WTC11 (cell line): ENCODE measurements at regions of chr9 and their contacts with region 1.

Region 1: DNA sequence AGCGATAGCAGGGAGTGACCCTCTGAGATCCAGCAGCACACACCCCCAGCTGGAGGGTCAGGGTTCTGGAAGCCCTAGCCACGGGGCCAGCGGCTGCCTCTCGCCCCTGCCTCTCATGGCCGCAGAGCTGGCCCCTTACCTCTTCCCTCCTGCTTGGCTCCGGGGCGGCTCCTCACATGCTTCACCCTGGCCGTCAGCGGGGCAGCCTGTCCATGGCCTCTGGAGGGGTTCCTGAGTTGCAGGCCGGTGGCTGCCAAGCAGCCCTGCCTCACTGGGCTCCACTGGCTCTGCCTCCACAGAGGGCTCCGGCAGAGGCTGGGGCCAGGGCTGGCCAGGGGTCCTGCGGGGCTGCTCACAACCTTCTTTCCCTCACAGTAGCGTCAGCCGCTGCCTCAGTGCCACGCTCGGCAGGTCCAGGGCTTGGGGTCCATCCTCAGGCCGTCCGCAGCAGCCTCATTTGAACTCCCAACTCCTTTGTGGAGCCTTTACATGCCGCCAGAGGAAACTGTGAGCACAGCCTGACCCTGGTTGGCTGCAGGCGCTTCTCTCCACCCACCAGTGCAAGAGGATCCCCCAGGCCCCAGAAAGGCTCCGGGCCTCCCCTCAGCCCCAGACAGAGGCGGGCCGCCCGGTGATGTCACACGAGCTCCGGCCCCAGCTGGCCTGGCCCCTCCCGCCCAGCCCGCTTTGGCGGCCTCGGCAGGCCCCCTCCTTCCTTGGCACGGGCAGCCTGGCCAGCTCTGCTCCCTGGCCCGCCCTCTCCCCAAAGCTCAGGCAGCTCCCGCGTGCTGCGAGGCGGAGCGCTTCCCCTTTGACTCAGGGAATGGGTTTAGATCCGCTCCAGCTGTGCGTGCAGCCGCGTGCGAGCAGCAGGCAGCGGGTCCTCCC is at the start of gene ANGPTL2:
- DNase-seq: peak; percentile 91
- ATAC-seq: peak; percentile 92
- H3K4me3 Mint-ChIP-seq: peak within 1 kb of the TSS; percentile 77
- H3K27ac Mint-ChIP-seq: peak within 1 kb of the TSS; percentile 54; the same call in 1 of the 2 replicates
- H3K4me1 Mint-ChIP-seq: peaks cover 29% of the 10 kb centered on the region
- H3K27me3 Mint-ChIP-seq: no peaks in the 10 kb centered on the region; the same call in none of the 2 replicates
- CTCF ChIP-seq: no peak
- total RNA-seq, gene ANGPTL2: 4.5 to 6.7 TPM (median 6.3 TPM) in 3 replicates

Region 2: DNA sequence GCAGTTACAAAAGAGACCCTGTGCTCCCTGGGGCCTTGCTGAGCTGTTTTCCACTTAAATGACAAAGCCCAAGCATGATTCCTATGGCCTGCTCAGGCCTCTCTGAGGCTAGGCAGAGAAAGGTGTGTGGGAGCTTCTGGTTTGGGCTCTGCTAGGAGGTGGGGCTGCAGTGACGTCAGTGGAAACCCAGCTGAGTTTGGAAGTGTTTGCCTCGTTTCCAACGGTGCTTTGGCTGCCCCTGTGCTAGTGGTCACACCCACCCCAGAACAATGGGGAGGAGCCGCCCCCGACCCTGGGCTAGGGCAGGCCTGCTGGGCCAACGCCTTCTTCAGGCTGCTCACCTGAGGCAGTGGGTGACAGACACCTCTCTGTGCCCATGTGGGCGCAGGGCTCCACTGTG is 10.4 kb before region 1 on chr9:
- CTCF ChIA-PET with region 1: interaction called, 15 read pairs
- POLR2A ChIA-PET with region 1: interaction called, 11 read pairs
- DNase-seq: peak; percentile 92
- ATAC-seq: peak; percentile 96
- H3K4me3 Mint-ChIP-seq: no peak overlapping the region
- H3K27ac Mint-ChIP-seq: peak overlapping the region; percentile 96
- H3K4me1 Mint-ChIP-seq: peaks cover 26% of the 10 kb centered on the region
- H3K27me3 Mint-ChIP-seq: no peaks in the 10 kb centered on the region
- CTCF ChIP-seq: no peak

Region 3: GRCh38 chr9:127187231-127187956 is 65.0 kb after region 1 on chr9:
- CTCF ChIA-PET with region 1: no interaction called
- POLR2A ChIA-PET with region 1: no interaction called
- DNase-seq: no peak
- ATAC-seq: no peak
- H3K4me3 Mint-ChIP-seq: no peak overlapping the region
- H3K27ac Mint-ChIP-seq: peak overlapping the region; percentile 60; the same call in 1 of the 2 replicates
- H3K4me1 Mint-ChIP-seq: peaks cover 12% of the 10 kb centered on the region
- H3K27me3 Mint-ChIP-seq: no peaks in the 10 kb centered on the region
- CTCF ChIP-seq: no peak